ENCODE measurements at regions of chr18 and their contacts with region 1.

Region 1: GRCh38 chr18:60123031-60123430 is 223.2 kb downstream of the PMAIP1 start:
- DNase-seq: no peak
- H3K4me3 Mint-ChIP-seq: no peak overlapping the region
- H3K27ac Mint-ChIP-seq: no peak overlapping the region
- H3K4me1 Mint-ChIP-seq: no peaks in the 10 kb centered on the region
- H3K27me3 Mint-ChIP-seq: peaks cover 3% of the 10 kb centered on the region

Region 2: GRCh38 chr18:60905699-60906098 is 782.7 kb after region 1 on chr18:
- CTCF ChIA-PET with region 1: no interaction called
- intact Hi-C with region 1: loop called (anchors 10 kb)
- DNase-seq: no peak
- H3K4me3 Mint-ChIP-seq: no peak overlapping the region
- H3K27ac Mint-ChIP-seq: no peak overlapping the region
- H3K4me1 Mint-ChIP-seq: no peaks in the 10 kb centered on the region
- H3K27me3 Mint-ChIP-seq: no peaks in the 10 kb centered on the region